CD8-positive, alpha-beta memory T cell (primary cell): ENCODE measurements at regions of chr7 and their contacts with region 1.

Region 1: GRCh38 chr7:20598459-20599309 is 16.8 kb upstream of the ABCB5 start:
- DNase-seq: peak in 2 of 5 donors; percentile 26 to 31
- H3K4me3 ChIP-seq: no peak overlapping the region
- H3K4me3 Mint-ChIP-seq: no peak overlapping the region
- H3K27ac ChIP-seq: no peak overlapping the region
- H3K27ac Mint-ChIP-seq: no peak overlapping the region
- H3K4me1 ChIP-seq: no peaks in the 10 kb centered on the region
- H3K4me1 Mint-ChIP-seq: peaks cover 0 to 6% (median 2%) of the 10 kb centered on the region in 3 donors
- H3K27me3 ChIP-seq: no peaks in the 10 kb centered on the region
- H3K27me3 Mint-ChIP-seq: peaks cover 0 to 15% of the 10 kb centered on the region in 2 donors

Region 2: GRCh38 chr7:19708397-19709248 is 890.1 kb before region 1 on chr7 and contains the start of gene POLR1F:
- CTCF ChIA-PET with region 1: interaction called, 25 read pairs
- POLR2A ChIA-PET with region 1: interaction called, 7 read pairs
- DNase-seq: peak; percentile 83 to 95 (median 92)
- H3K4me3 ChIP-seq: peak within 1 kb of the TSS; percentile 89
- H3K4me3 Mint-ChIP-seq: peak within 1 kb of the TSS; percentile 94 to 98 (median 95)
- H3K27ac ChIP-seq: peak within 1 kb of the TSS; percentile 85
- H3K27ac Mint-ChIP-seq: peak within 1 kb of the TSS; percentile 82 to 99 (median 98)
- H3K4me1 ChIP-seq: peaks cover 32% of the 10 kb centered on the region
- H3K4me1 Mint-ChIP-seq: peaks cover 51 to 62% (median 56%) of the 10 kb centered on the region in 3 donors
- H3K27me3 ChIP-seq: no peaks in the 10 kb centered on the region
- H3K27me3 Mint-ChIP-seq: peaks cover 2 to 4% of the 10 kb centered on the region in 2 donors
- total RNA-seq, gene POLR1F: 30.6 to 35.5 TPM

Region 3: GRCh38 chr7:19713676-19714075 is 885.0 kb before region 1 on chr7:
- CTCF ChIA-PET with region 1: interaction called, 25 read pairs
- POLR2A ChIA-PET with region 1: interaction called, 7 read pairs
- DNase-seq: peak; percentile 10 to 52 (median 32)
- H3K4me3 ChIP-seq: no peak overlapping the region
- H3K4me3 Mint-ChIP-seq: no peak overlapping the region
- H3K27ac ChIP-seq: no peak overlapping the region
- H3K27ac Mint-ChIP-seq: peak overlapping the region in 1 of 8 donors; percentile 41
- H3K4me1 ChIP-seq: peaks cover 8% of the 10 kb centered on the region
- H3K4me1 Mint-ChIP-seq: peaks cover 17 to 21% (median 17%) of the 10 kb centered on the region in 3 donors
- H3K27me3 ChIP-seq: no peaks in the 10 kb centered on the region
- H3K27me3 Mint-ChIP-seq: peaks cover 2 to 11% of the 10 kb centered on the region in 2 donors

Region 4: GRCh38 chr7:20503278-20503950 is 95.3 kb before region 1 on chr7:
- CTCF ChIA-PET with region 1: no interaction called
- POLR2A ChIA-PET with region 1: no interaction called
- DNase-seq: no peak
- H3K4me3 ChIP-seq: no peak overlapping the region
- H3K4me3 Mint-ChIP-seq: no peak overlapping the region
- H3K27ac ChIP-seq: no peak overlapping the region
- H3K27ac Mint-ChIP-seq: no peak overlapping the region
- H3K4me1 ChIP-seq: no peaks in the 10 kb centered on the region
- H3K4me1 Mint-ChIP-seq: no peaks in the 10 kb centered on the region
- H3K27me3 ChIP-seq: no peaks in the 10 kb centered on the region
- H3K27me3 Mint-ChIP-seq: no peaks in the 10 kb centered on the region